ENCODE measurements at regions of chr4 and their contacts with region 1.

Region 1: GRCh38 chr4:140326395-140326993 is 47.0 kb upstream of the SCOC start:
- DNase-seq: no peak
- ATAC-seq: peak; percentile 71 to 87 (median 80)
- H3K4me3 ChIP-seq: no peak overlapping the region
- H3K27ac ChIP-seq: no peak overlapping the region
- H3K4me1 ChIP-seq: no peaks in the 10 kb centered on the region
- H3K27me3 ChIP-seq: no peaks in the 10 kb centered on the region
- CTCF ChIP-seq: peak; percentile 58

Region 2: DNA sequence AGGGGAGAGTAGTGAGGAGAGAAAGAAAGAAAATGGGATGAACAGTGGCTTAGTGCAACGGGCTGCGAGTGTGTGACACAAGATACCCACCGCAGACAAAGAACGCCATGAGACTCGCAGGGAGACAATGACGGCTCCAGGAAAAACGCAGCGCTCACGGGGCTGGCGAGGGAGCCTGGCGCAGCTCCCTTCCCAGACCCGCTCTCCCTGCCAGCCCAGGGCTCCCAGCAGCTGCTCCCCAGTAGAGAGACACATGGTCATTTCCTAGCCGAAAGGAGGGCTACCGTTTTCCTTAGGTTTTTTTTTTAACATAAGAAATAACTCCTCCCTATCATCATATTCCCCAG is 322.0 kb before region 1 on chr4:
- intact Hi-C with region 1: loop called in 1 of 2 experiments (anchors 10 kb)
- DNase-seq: peak; percentile 59 to 78
- ATAC-seq: peak; percentile 91 to 98 (median 96)
- H3K4me3 ChIP-seq: peak overlapping the region; percentile 61
- H3K27ac ChIP-seq: peak overlapping the region; percentile 57
- H3K4me1 ChIP-seq: peaks cover 8% of the 10 kb centered on the region
- H3K27me3 ChIP-seq: no peaks in the 10 kb centered on the region
- CTCF ChIP-seq: no peak

Region 3: DNA sequence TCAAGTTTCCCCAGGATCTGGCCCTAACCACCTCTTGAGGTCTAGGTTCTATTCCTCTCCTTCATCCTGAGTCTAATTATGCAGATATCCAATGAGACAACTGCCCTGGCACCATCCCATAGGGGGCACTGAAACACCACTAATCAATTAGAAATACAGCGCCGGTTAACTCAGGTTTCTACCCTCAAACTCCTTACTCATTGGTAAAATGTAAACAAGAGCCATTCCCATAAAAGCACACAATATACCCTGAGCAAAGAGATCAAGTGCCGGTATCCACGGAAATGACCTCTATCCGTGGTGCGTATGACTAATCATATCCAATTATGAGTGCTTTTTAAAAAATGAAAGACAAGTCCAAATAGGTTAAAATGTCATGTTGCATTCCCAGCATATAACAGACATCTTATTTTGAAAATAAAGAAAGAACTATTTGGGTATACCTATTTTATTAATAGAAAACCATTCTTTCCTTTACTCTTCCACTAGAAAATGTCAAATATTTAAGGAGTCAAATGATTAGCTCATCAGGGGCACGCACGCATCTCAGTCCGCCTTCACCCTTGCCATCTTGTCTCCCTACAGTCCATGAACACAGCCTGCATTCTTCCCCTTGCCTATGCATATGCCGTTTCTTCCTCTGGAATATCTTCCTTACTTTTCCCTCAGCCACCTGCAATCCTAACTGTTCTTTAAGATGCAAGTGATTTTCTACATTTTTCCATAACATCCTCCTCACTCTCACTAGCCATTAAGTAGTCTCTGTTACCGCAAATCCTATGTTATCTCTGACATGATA is 313.6 kb before region 1 on chr4:
- intact Hi-C with region 1: loop called (anchors 10 kb)
- DNase-seq: peak; percentile 33 to 60
- ATAC-seq: peak; percentile 79 to 95 (median 84)
- H3K4me3 ChIP-seq: peak overlapping the region; percentile 12
- H3K27ac ChIP-seq: no peak overlapping the region
- H3K4me1 ChIP-seq: no peaks in the 10 kb centered on the region
- H3K27me3 ChIP-seq: no peaks in the 10 kb centered on the region
- CTCF ChIP-seq: peak; percentile 50

Region 4: DNA sequence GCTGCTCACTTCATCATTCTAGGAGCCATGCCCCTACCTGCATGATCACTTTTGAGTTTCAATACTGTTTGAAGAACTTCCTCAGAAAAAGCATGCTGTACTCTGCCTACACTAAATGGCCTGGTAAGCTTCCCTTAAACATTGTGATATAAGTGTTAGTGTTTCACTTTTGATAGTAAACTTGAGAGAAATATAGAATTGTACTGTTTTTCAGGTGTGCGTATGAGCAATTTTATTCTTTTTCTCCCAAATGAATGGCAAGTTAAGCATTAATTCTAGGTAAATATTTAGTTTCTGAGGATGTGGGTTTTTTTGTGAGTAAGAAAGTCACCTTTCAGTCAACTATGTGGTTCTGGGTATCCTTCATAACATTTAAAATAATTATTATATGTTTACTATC is 1794.4 kb after region 1 on chr4:
- intact Hi-C with region 1: no loop called
- DNase-seq: no peak
- ATAC-seq: no peak
- H3K4me3 ChIP-seq: no peak overlapping the region
- H3K27ac ChIP-seq: no peak overlapping the region
- H3K4me1 ChIP-seq: no peaks in the 10 kb centered on the region
- H3K27me3 ChIP-seq: no peaks in the 10 kb centered on the region
- CTCF ChIP-seq: no peak

Measured in psoas muscle (tissue), 8 donors.